ENCODE measurements at regions of chr1 and their contacts with region 1.

Region 1: DNA sequence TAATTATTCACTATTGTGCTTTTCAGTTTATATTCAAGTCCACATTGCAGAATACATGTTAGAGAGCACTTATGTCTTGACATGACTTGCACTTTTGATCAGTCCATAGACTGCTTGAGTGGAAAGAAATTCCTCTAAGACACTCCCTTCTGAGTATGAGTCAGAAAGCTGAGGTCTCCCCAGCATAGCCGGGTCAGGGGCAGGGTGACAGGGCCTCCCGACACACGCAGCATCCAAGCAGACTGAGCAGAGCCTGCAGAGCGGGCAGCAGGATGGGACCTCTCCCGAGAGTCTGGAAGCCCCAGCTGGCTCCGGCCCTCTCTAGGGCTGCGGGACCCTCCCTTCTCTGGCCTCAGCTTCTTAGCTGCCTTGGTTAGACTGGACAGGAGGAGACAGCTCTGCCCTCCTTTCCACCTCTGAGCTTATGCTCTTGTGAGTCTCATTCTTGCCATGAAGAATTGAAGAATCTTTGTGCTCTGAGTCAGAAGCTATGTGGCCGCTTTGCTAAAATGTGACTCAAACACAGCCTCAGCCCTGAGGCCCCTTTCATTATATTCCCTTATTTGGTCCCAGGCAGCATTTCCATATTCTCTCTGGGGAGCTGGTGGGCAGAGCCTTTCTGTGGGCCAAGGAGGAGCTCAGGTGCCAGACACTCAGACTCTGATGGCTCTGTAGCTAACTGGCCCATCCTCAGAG is 11.2 kb upstream of the CAPN2 start:
- DNase-seq: peak; percentile 79 to 93 (median 85)
- ATAC-seq: peak; percentile 93
- H3K4me3 ChIP-seq: no peak overlapping the region
- H3K27ac ChIP-seq: peak overlapping the region; percentile 70
- H3K4me1 ChIP-seq: peaks cover 17 to 29% of the 10 kb centered on the region in 2 experiments
- H3K27me3 ChIP-seq: no peaks in the 10 kb centered on the region
- CTCF ChIP-seq: 0 out of 6 replicates have a peak, but pooled peaks of 1 of the 3 experiments have one; percentile 6
- EP300 ChIP-seq: peak; percentile 68
- POLR2A ChIP-seq: peak; percentile 59; the same call in 1 of the 2 replicates
- RAD21 ChIP-seq: peak in 1 of 2 experiments; percentile 26; a peak in 2 of 4 replicates

Region 2: GRCh38 chr1:223621312-223621734 is 79.8 kb before region 1 on chr1:
- CTCF ChIA-PET with region 1: no interaction called
- POLR2A ChIA-PET with region 1: no interaction called
- in situ Hi-C with region 1: no loop called
- intact Hi-C with region 1: no loop called
- DNase-seq: no peak
- ATAC-seq: no peak
- H3K4me3 ChIP-seq: no peak overlapping the region
- H3K27ac ChIP-seq: no peak overlapping the region
- H3K4me1 ChIP-seq: no peaks in the 10 kb centered on the region; a peak in 1 of 5 replicates
- H3K27me3 ChIP-seq: peaks cover 39 to 57% of the 10 kb centered on the region in 2 experiments; a peak in 4 of 5 replicates
- CTCF ChIP-seq: no peak
- EP300 ChIP-seq: no peak
- POLR2A ChIP-seq: no peak
- RAD21 ChIP-seq: no peak

Region 3: DNA sequence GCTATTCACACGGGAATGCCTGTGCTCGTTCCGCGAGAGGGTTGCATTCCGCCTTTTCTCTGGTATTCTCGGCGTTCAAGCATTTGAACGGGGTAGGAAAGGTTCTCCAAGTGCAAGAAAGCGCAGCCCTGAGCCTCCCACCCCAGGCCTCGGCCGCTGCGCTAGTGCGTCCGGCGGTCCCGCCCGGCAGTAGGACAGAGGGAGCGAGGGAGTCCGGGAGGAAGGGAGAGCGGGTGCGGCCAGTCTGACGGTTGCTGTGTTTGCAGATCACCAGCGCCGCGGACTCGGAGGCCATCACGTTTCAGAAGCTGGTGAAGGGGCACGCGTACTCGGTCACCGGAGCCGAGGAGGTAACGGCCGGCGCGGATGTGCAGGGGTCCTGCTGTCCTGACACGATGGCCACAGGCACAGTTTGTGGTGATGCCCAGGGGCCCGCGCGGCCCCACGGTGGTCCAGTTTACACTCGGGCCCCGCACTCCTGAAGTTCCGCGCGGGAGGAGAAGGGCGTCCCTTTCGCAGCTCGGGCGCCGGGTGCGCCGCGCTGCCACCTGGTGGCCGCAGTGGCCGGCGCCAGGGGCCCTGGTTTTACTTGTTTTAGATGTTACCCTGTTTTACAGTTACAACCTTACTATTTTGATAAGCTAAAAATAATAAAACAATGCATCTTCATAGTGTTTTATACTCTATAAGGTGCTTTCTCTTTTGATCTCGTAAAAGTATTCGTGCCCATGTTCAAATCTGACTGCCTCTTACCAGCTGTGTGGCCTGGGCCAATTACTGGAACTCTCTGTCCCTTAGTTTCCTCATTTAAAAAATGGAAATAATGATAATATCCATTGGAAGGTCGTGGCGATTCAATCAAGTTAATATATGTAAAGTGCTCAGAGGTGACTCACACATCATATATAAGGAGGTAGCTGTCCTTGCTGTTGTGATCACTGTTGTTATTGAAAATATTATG is 48.0 kb after region 1 on chr1:
- CTCF ChIA-PET with region 1: interaction called, 40 read pairs
- POLR2A ChIA-PET with region 1: interaction called, 4 read pairs
- in situ Hi-C with region 1: no loop called
- intact Hi-C with region 1: loop called (anchors 1 kb)
- DNase-seq: peak; percentile 77 to 83 (median 80)
- ATAC-seq: peak; percentile 96
- H3K4me3 ChIP-seq: no peak overlapping the region
- H3K27ac ChIP-seq: no peak overlapping the region
- H3K4me1 ChIP-seq: peaks cover 0 to 13% of the 10 kb centered on the region in 2 experiments; a peak in 2 of 5 replicates
- H3K27me3 ChIP-seq: no peaks in the 10 kb centered on the region
- CTCF ChIP-seq: peak; percentile 94 to 97 (median 94)
- EP300 ChIP-seq: no peak
- POLR2A ChIP-seq: no peak
- RAD21 ChIP-seq: peak; percentile 91 to 94

Region 4: DNA sequence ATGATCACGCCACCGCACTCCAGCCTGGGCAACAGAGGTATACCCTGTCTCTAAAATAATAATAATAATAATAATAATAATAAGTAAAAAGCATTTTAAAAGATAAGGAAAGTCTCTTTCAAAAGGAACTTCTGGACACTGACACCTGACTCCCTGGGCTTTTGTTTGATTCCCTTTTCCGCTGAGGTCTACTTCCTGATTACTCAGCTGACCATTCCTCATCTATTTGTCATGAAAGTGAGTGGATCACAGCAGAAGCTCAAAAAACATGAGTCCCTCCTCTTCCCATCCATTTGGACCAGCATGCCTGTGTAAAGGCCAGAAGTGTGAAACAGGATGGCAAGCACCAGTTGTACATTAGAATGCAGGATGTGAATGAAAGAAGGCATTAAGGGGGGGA is 351.7 kb after region 1 on chr1:
- CTCF ChIA-PET with region 1: interaction called, 12 read pairs
- POLR2A ChIA-PET with region 1: no interaction called
- in situ Hi-C with region 1: no loop called
- intact Hi-C with region 1: loop called (anchors 1 kb)
- DNase-seq: no peak
- ATAC-seq: no peak
- H3K4me3 ChIP-seq: no peak overlapping the region
- H3K27ac ChIP-seq: no peak overlapping the region
- H3K4me1 ChIP-seq: no peaks in the 10 kb centered on the region; a peak in 2 of 5 replicates
- H3K27me3 ChIP-seq: no peaks in the 10 kb centered on the region
- CTCF ChIP-seq: no peak
- EP300 ChIP-seq: no peak
- POLR2A ChIP-seq: no peak
- RAD21 ChIP-seq: no peak